ENCODE measurements at regions of chr10 and their contacts with region 1.

Region 1: GRCh38 chr10:37857287-37858211 is at the start of gene ZNF248:
- DNase-seq: peak; percentile 88 to 97
- H3K4me3 ChIP-seq: peak within 1 kb of the TSS; percentile 81
- H3K27ac ChIP-seq: peak within 1 kb of the TSS; percentile 99 to 100
- H3K4me1 ChIP-seq: peaks cover 0 to 26% of the 10 kb centered on the region in 2 donors
- H3K27me3 ChIP-seq: no peaks in the 10 kb centered on the region
- CTCF ChIP-seq: peak in 1 of 3 experiments; percentile 9
- total RNA-seq, gene ZNF248: 13.9 TPM

Region 2: GRCh38 chr10:37760817-37761216 is 96.7 kb before region 1 on chr10:
- intact Hi-C with region 1: no loop called
- DNase-seq: no peak
- H3K4me3 ChIP-seq: no peak overlapping the region
- H3K27ac ChIP-seq: no peak overlapping the region
- H3K4me1 ChIP-seq: no peaks in the 10 kb centered on the region
- H3K27me3 ChIP-seq: no peaks in the 10 kb centered on the region
- CTCF ChIP-seq: no peak

Region 3: GRCh38 chr10:37976091-37976879 is 118.7 kb after region 1 on chr10 and contains the start of gene ZNF25:
- intact Hi-C with region 1: loop called (anchors 1 kb)
- DNase-seq: peak; percentile 96 to 100
- H3K4me3 ChIP-seq: peak within 1 kb of the TSS; percentile 75 to 92
- H3K27ac ChIP-seq: peak within 1 kb of the TSS; percentile 97 to 98
- H3K4me1 ChIP-seq: no peaks in the 10 kb centered on the region
- H3K27me3 ChIP-seq: no peaks in the 10 kb centered on the region
- CTCF ChIP-seq: peak; percentile 84 to 92 (median 89)
- total RNA-seq, gene ZNF25: 8.9 TPM

Region 4: GRCh38 chr10:38010119-38010903 is 152.8 kb after region 1 on chr10 and contains the start of gene ZNF33A:
- intact Hi-C with region 1: loop called (anchors 1 kb)
- DNase-seq: peak; percentile 83 to 96
- H3K4me3 ChIP-seq: peak within 1 kb of the TSS; percentile 61 to 89
- H3K27ac ChIP-seq: peak within 1 kb of the TSS; percentile 97 to 98
- H3K4me1 ChIP-seq: peaks cover 0 to 9% of the 10 kb centered on the region in 2 donors
- H3K27me3 ChIP-seq: no peaks in the 10 kb centered on the region
- CTCF ChIP-seq: peak in 1 of 3 experiments; percentile 8
- total RNA-seq, gene ZNF33A: 8.0 TPM

Measured in ascending aorta (tissue), 2 donors.